ENCODE measurements at regions of chr12 and their contacts with region 1.

Region 1: GRCh38 chr12:55142669-55143565 is 16.7 kb downstream of the OR9K2 start:
- DNase-seq: peak; percentile 39 to 72 (median 56)
- ATAC-seq: peak; percentile 87
- H3K4me3 ChIP-seq: no peak overlapping the region
- H3K27ac ChIP-seq: no peak overlapping the region
- H3K4me1 ChIP-seq: no peaks in the 10 kb centered on the region
- H3K27me3 ChIP-seq: no peaks in the 10 kb centered on the region; a peak in 1 of 5 replicates
- CTCF ChIP-seq: peak; percentile 68 to 81 (median 74)
- EP300 ChIP-seq: no peak
- POLR2A ChIP-seq: no peak
- RAD21 ChIP-seq: peak; percentile 73 to 78

Region 2: GRCh38 chr12:54701940-54702592 is 440.9 kb before region 1 on chr12:
- CTCF ChIA-PET with region 1: no interaction called
- POLR2A ChIA-PET with region 1: no interaction called
- in situ Hi-C with region 1: no loop called
- intact Hi-C with region 1: loop called (anchors 2 kb)
- DNase-seq: peak; percentile 26 to 66 (median 35)
- ATAC-seq: peak; percentile 76
- H3K4me3 ChIP-seq: no peak overlapping the region
- H3K27ac ChIP-seq: no peak overlapping the region
- H3K4me1 ChIP-seq: no peaks in the 10 kb centered on the region
- H3K27me3 ChIP-seq: no peaks in the 10 kb centered on the region; a peak in 1 of 5 replicates
- CTCF ChIP-seq: peak; percentile 46 to 74 (median 61); a peak in 5 of 6 replicates
- EP300 ChIP-seq: no peak
- POLR2A ChIP-seq: no peak
- RAD21 ChIP-seq: peak; percentile 75

Region 3: GRCh38 chr12:54759751-54760150 is 383.2 kb before region 1 on chr12:
- CTCF ChIA-PET with region 1: no interaction called
- POLR2A ChIA-PET with region 1: no interaction called
- in situ Hi-C with region 1: no loop called
- intact Hi-C with region 1: loop called (anchors 10 kb)
- DNase-seq: peak in 2 of 4 experiments; percentile 17 to 53
- ATAC-seq: peak; percentile 86
- H3K4me3 ChIP-seq: no peak overlapping the region
- H3K27ac ChIP-seq: no peak overlapping the region
- H3K4me1 ChIP-seq: no peaks in the 10 kb centered on the region
- H3K27me3 ChIP-seq: no peaks in the 10 kb centered on the region
- CTCF ChIP-seq: peak; percentile 59 to 75 (median 75); a peak in 5 of 6 replicates
- EP300 ChIP-seq: no peak
- POLR2A ChIP-seq: no peak
- RAD21 ChIP-seq: peak; percentile 81 to 85

Region 4: DNA sequence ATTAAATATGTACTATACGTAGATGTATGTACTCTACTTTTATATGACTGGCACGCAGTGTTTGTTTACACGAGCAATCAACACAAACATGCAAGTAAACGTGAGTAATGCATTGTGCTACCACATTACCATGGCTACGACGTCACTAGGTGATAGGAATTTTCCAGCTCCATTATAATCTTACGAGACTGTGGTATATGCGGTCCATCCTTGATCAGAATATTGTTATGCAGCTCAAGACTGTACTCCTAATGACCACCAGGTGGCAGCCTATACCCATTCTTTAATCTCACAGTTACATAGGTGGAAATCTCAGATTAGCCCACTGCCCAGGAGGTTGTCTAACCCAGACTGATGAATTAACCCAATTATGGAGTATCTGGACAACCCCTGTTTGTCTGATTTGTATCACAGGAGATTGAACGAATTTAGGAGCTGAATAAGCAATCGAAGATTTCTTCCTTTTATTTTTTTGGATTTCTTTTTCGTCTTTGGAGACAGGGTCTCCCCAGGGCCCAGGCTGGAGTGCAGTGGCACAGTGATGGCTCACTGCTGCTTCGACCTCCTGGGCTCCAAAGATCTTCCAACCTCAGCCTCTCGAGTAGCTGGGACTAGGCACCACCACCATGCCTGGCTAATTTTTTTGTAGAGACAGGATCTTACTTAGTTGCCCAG is 149.6 kb before region 1 on chr12:
- CTCF ChIA-PET with region 1: interaction called, 13 read pairs
- POLR2A ChIA-PET with region 1: no interaction called
- in situ Hi-C with region 1: loop called (anchors 10 kb)
- intact Hi-C with region 1: loop called (anchors 1 kb)
- DNase-seq: peak; percentile 65 to 79 (median 68)
- ATAC-seq: peak; percentile 88
- H3K4me3 ChIP-seq: no peak overlapping the region
- H3K27ac ChIP-seq: no peak overlapping the region
- H3K4me1 ChIP-seq: peaks cover 3 to 20% of the 10 kb centered on the region in 2 experiments; a peak in 4 of 5 replicates
- H3K27me3 ChIP-seq: peaks cover 0 to 7% of the 10 kb centered on the region in 2 experiments; a peak in 1 of 5 replicates
- CTCF ChIP-seq: peak; percentile 81 to 90 (median 81)
- EP300 ChIP-seq: no peak
- POLR2A ChIP-seq: no peak
- RAD21 ChIP-seq: peak; percentile 94 to 96

Measured in K562 (cell line).